ENCODE measurements at regions of chr9 and their contacts with region 1.

Region 1: GRCh38 chr9:91193658-91194391 is 167.9 kb downstream of the AUH start:
- DNase-seq: peak; percentile 91
- H3K4me3 ChIP-seq: peak overlapping the region in 3 of 4 donors; percentile 35 to 56 (median 39)
- H3K27ac ChIP-seq: peak overlapping the region; percentile 95 to 99 (median 98)
- H3K4me1 ChIP-seq: peaks cover 44 to 73% (median 60%) of the 10 kb centered on the region in 4 donors
- H3K27me3 ChIP-seq: no peaks in the 10 kb centered on the region
- CTCF ChIP-seq: no peak
- EP300 ChIP-seq: peak; percentile 79
- POLR2A ChIP-seq: peak; percentile 91

Region 2: GRCh38 chr9:91131433-91131839 is 62.4 kb before region 1 on chr9:
- in situ Hi-C with region 1: no loop called
- intact Hi-C with region 1: loop called (anchors 5 kb)
- DNase-seq: peak; percentile 78
- H3K4me3 ChIP-seq: no peak overlapping the region
- H3K27ac ChIP-seq: peak overlapping the region; percentile 20 to 75 (median 60)
- H3K4me1 ChIP-seq: peaks cover 6 to 20% (median 12%) of the 10 kb centered on the region in 4 donors
- H3K27me3 ChIP-seq: no peaks in the 10 kb centered on the region
- CTCF ChIP-seq: no peak
- EP300 ChIP-seq: peak; percentile 92
- POLR2A ChIP-seq: no peak

Measured in transverse colon (tissue), 4 donors.